ENCODE measurements at regions of chr10 and their contacts with region 1.

Region 1: DNA sequence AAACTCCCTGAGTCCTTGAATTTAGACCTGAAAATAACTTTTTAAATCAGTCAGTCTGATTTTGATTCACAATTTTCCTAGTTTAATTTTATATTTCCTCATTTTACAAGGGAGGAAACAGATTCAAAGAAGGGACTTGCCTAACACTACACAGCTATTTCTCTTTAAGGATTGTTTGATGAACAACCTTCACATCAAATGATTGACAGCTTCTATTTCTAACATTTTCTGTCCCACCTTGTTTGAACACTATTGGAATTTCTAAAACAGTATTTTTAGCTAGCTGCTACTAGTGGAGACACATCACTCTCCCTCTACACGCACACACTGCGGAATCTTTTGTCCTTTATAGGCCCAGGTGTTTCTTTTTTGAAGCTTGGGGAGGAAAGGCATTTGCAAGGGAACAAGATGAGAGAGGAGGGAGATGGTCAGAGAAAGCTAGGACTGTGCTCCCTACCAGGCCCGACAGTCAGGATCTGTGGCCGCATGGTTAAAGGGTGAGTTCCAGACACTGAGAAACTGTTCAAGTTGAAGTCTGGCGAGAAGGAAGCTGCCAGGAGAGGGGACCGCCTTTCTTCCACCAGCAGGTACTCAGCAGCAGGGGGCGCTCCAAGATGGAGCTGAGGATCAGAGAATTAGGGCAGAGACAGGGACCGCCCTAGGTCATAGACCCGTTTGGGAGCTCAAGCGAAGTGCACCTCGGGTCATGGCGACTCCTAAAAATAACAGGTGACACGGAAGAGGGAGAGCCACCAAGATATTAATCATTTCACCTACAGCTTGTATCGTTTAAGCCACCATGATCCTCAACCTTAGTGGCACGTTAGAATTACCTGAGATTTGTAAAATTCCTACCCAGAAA is 49.7 kb downstream of the DNAJC12 start:
- DNase-seq: peak; percentile 26
- H3K4me3 ChIP-seq: no peak overlapping the region
- H3K27ac ChIP-seq: no peak overlapping the region
- H3K4me1 ChIP-seq: no peaks in the 10 kb centered on the region
- H3K27me3 ChIP-seq: peaks cover 0 to 5% of the 10 kb centered on the region in 2 experiments
- CTCF ChIP-seq: peak; percentile 72 to 77
- POLR2A ChIP-seq: no peak

Region 2: DNA sequence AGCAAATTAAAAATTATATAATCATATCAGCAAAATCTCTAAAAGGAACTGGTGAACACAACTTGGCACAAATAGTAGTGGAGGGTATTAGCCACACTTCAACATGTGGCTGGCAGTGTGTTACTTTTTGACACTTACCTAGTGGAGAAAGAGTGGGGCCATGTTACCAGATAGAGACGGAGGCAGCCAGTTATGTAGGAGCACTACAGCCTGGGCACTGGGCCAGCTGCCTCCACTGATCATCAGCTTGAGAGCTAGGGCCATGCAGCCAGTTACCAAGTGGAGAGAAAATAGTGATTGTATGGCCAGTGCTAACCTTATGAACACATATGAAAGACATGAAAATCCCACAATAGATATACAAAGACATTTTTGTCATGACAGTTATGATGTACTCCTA is 335.4 kb before region 1 on chr10:
- CTCF ChIA-PET with region 1: no interaction called
- POLR2A ChIA-PET with region 1: no interaction called
- dilution Hi-C with region 1: no loop called
- intact Hi-C with region 1: no loop called
- DNase-seq: no peak
- H3K4me3 ChIP-seq: no peak overlapping the region
- H3K27ac ChIP-seq: no peak overlapping the region
- H3K4me1 ChIP-seq: no peaks in the 10 kb centered on the region
- H3K27me3 ChIP-seq: no peaks in the 10 kb centered on the region
- CTCF ChIP-seq: no peak
- POLR2A ChIP-seq: no peak

Region 3: DNA sequence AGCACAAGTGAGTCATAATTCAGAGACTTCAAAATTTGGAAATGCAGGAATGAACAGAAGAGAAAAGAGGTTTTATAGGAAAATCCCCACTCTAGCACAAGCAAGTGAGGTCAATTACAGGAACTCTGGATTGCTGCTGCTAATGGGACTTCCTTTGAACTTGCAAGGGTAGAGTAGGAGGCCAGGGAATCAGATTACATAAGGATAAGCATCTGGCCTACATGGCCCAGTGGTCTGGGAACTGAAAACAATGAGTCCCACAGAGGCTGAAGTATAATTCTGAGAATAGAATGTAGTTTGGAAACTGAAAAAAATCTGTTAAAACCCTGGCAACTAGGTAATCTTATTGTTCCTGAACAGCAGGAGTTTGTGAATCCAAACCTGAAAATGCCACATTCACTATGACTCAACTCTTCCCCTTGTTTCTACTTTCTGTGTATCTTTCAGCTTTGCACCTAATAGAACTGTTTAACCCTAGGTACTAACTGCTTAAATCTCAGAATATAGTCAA is 158.7 kb before region 1 on chr10:
- CTCF ChIA-PET with region 1: no interaction called
- POLR2A ChIA-PET with region 1: no interaction called
- dilution Hi-C with region 1: no loop called
- intact Hi-C with region 1: no loop called
- DNase-seq: peak; percentile 71
- H3K4me3 ChIP-seq: no peak overlapping the region
- H3K27ac ChIP-seq: no peak overlapping the region
- H3K4me1 ChIP-seq: no peaks in the 10 kb centered on the region
- H3K27me3 ChIP-seq: no peaks in the 10 kb centered on the region
- CTCF ChIP-seq: no peak
- POLR2A ChIP-seq: no peak

Region 4: DNA sequence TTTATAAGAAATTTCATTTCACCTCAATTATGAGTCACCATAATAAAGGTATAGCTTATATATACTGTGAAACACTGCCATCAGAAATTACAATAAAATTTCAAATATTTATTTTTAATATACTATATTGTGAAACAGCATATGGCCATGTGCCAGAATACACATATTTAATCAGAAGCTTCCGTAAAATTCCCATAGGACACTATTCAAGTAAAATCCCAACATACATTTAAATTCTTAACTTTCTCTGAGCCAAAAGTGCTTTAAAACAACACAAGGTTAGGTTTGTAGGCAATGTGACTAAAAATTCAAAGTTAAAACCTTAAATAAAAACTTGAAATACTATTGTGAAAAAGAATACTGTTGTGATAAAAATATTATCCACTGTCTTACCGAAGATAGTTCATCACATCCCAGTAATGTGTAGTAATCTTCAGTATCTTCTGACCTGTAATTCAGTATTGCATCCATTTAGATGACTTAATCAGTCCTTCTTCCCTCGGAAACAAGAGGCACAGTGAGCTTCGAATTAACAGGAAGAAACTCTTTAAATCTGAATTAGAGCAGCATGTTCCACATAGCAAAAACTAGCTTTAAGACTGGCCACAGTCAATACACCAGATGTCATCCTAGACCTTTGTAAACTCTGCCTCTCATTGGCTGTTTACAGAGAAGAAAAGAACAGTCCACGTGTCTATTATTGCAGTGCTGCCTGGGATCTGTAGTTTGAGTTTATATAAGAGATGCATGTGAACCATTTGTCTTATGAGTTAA is 49.5 kb after region 1 on chr10 and contains the start of gene DNAJC12:
- CTCF ChIA-PET with region 1: interaction called, 10 read pairs
- POLR2A ChIA-PET with region 1: no interaction called
- dilution Hi-C with region 1: no loop called
- intact Hi-C with region 1: no loop called
- DNase-seq: peak; percentile 46
- H3K4me3 ChIP-seq: no peak within 1 kb of the TSS
- H3K27ac ChIP-seq: no peak within 1 kb of the TSS
- H3K4me1 ChIP-seq: no peaks in the 10 kb centered on the region
- H3K27me3 ChIP-seq: no peaks in the 10 kb centered on the region
- CTCF ChIP-seq: no peak
- POLR2A ChIP-seq: no peak
- total RNA-seq, gene DNAJC12: 1.0 and 2.4 TPM in 2 replicates